AG04450 (cell line): ENCODE measurements at regions of chr1 and their contacts with region 1.

Region 1: GRCh38 chr1:212368073-212368484 is 46.6 kb downstream of the PACC1 start:
- DNase-seq: peak; percentile 47
- H3K4me3 ChIP-seq: no peak overlapping the region
- H3K27ac ChIP-seq: no peak overlapping the region
- H3K27me3 ChIP-seq: no peaks in the 10 kb centered on the region
- CTCF ChIP-seq: peak; percentile 95

Region 2: GRCh38 chr1:212355230-212355969 is 12.7 kb before region 1 on chr1:
- CTCF ChIA-PET with region 1: interaction called, 14 read pairs
- POLR2A ChIA-PET with region 1: no interaction called
- DNase-seq: no peak
- H3K4me3 ChIP-seq: no peak overlapping the region
- H3K27ac ChIP-seq: no peak overlapping the region
- H3K27me3 ChIP-seq: no peaks in the 10 kb centered on the region
- CTCF ChIP-seq: no peak

Region 3: GRCh38 chr1:212401838-212402582 is 33.9 kb after region 1 on chr1:
- CTCF ChIA-PET with region 1: interaction called, 4 read pairs
- POLR2A ChIA-PET with region 1: interaction called, 12 read pairs
- DNase-seq: no peak
- H3K4me3 ChIP-seq: no peak overlapping the region
- H3K27ac ChIP-seq: no peak overlapping the region
- H3K27me3 ChIP-seq: no peaks in the 10 kb centered on the region
- CTCF ChIP-seq: no peak

Region 4: DNA sequence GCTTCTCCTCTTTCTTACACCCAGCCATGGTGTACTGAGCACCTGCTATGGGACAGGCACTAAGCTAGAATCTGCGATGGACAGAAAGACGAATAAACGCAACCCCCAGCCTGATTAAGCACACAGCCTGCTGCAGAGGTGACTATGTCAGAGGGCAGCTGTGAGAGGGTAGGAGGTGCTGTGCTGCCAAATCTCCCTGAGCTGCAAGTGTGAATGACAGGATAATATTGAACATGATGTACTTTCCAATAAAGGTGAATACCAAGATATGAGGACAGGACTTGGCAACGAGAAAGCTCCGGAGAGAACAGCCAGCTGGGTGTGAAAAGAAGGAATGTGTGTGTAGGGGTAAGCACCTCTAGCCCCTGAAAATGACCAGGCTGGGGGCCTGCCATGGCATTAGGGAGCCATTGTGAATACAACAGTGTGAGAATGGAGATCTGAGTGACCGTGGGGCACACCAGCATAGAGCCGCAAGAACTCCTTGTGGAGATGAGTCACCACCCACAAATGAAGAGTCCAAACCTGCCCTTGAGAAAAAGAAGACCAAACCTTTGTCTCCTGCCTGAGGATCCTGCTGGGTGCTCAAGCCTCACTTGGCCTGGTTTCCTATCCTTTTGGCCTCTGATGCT is 157.5 kb after region 1 on chr1:
- CTCF ChIA-PET with region 1: no interaction called
- POLR2A ChIA-PET with region 1: no interaction called
- DNase-seq: no peak
- H3K4me3 ChIP-seq: no peak overlapping the region
- H3K27ac ChIP-seq: peak overlapping the region; percentile 2
- H3K27me3 ChIP-seq: peaks cover 19% of the 10 kb centered on the region
- CTCF ChIP-seq: no peak

Region 5: DNA sequence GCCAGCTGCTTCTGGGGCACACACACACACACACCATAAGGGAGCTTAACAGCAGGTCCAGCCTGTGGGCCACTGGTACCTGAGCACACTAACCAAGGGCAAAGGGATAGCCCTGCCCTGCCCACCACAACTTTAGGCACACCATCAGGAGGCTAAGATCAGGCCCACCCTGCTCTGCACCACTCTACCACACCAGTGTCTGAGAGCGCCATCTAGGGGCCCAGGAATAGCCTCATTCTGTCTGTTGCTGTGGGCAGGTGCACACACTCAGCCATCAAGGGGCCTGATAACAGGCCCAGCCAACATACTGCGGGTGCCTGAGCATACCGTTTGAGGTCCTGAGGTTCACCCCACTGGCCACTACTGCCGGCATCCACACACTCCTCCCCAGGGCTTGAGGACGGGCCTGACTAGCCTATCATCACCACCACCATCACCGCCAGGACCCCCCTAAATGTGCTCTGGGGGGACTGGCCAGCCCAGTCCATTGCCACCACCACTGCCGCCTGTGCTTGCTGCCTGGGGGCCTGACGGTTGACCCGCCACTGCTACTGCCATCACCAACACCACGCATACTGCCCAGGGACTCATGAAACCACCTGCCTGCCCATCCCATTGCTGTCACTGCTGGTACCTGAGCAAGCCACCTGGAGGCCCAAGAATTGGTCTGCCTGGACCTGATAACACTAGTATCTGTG is 392.2 kb after region 1 on chr1:
- CTCF ChIA-PET with region 1: no interaction called
- POLR2A ChIA-PET with region 1: no interaction called
- DNase-seq: no peak
- H3K4me3 ChIP-seq: no peak overlapping the region
- H3K27ac ChIP-seq: no peak overlapping the region
- H3K27me3 ChIP-seq: no peaks in the 10 kb centered on the region
- CTCF ChIP-seq: peak; percentile 29